ENCODE measurements at regions of chr5 and their contacts with region 1.

Region 1: DNA sequence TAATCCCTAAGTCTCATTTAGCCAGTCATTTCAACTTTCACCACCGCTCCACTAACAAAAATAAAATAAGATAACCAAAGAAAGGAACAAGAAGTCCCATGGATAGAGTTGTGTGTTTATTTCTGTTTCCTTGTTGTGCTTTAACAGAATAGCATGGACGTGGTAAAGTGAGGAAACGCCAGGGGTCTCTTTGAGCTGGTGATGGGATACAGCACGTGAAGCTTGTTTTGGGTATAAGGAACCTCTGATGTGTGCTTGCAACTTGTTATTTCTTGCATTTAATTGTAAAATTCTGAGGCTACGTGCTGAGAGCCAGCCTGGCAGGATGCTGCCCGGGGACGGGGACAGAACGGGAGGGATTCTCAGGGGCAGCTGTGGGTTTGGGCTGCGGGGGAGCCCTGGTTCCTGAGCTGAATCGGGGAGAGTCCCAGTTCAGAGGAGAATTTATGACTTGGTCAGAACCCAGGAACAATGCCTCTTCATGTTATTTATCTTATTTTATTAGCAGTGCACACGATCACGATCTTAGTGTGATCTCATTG is 63.4 kb downstream of the ANKRD33B start:
- DNase-seq: peak; percentile 38
- H3K4me3 Mint-ChIP-seq: peak overlapping the region; percentile 76
- H3K27ac Mint-ChIP-seq: no peak overlapping the region
- H3K4me1 Mint-ChIP-seq: peaks cover 26% of the 10 kb centered on the region
- H3K27me3 Mint-ChIP-seq: peaks cover 6% of the 10 kb centered on the region

Region 2: DNA sequence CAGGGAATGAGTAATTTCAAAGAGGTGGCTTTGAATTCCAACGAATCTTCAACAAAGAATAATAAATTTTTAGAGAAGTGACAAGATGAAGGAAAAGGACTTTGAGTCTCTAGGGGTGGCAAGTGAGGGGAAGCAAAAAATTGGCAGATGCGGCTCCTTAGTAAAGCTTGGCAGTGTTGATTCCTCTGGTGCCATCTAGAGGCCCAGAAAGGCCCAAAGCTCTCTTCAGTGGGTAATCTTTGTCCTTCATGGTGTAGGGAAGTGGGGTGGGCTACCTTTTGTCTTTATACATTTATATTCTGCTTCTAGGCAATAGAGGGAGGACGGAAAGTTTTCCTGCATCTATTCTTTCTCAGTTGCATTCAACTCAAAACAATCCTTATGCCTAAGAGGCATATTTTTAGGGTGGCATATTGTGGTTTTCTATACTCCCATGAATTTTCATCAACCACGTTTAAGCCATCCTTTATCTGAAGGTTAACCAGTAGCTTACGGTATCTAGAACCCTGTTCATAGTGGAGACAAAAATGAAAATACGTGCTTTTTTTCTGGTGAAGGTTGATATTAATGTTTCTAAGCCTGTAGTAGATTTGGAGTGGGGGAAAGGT is 203.0 kb before region 1 on chr5:
- CTCF ChIA-PET with region 1: interaction called, 17 read pairs
- intact Hi-C with region 1: no loop called
- DNase-seq: peak; percentile 43
- H3K4me3 Mint-ChIP-seq: no peak overlapping the region
- H3K27ac Mint-ChIP-seq: no peak overlapping the region
- H3K4me1 Mint-ChIP-seq: peaks cover 35% of the 10 kb centered on the region
- H3K27me3 Mint-ChIP-seq: no peaks in the 10 kb centered on the region

Region 3: DNA sequence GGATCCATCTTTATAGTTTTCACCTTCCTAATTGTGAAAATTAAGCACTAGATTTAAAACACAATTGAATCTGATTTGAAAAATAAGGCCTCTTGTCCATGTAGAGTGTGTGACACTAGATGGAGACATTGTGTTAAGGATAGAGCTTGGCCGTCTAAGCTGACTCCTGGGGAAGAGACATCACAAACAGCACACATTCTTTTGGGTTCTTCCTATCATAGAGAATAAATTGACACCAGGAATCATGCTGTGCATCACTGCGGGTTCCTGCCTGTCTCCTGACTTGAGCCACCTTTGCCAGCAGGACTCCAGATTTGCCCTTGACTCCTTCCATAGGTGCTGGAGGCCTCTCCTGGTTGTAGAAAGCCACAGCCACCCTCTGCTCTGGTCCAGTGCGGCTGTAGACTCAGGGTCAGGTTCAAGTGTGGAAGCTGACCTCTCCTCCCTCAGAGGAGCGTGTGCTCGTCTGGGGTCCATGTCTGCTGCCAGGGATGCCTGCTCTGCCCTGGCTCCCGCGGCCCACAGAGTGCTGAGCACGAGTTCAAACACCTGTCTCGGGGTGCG is 174.4 kb before region 1 on chr5:
- CTCF ChIA-PET with region 1: interaction called, 84 read pairs
- intact Hi-C with region 1: loop called (anchors 1 kb)
- DNase-seq: peak; percentile 22
- H3K4me3 Mint-ChIP-seq: no peak overlapping the region
- H3K27ac Mint-ChIP-seq: no peak overlapping the region
- H3K4me1 Mint-ChIP-seq: peaks cover 1% of the 10 kb centered on the region
- H3K27me3 Mint-ChIP-seq: no peaks in the 10 kb centered on the region

Region 4: DNA sequence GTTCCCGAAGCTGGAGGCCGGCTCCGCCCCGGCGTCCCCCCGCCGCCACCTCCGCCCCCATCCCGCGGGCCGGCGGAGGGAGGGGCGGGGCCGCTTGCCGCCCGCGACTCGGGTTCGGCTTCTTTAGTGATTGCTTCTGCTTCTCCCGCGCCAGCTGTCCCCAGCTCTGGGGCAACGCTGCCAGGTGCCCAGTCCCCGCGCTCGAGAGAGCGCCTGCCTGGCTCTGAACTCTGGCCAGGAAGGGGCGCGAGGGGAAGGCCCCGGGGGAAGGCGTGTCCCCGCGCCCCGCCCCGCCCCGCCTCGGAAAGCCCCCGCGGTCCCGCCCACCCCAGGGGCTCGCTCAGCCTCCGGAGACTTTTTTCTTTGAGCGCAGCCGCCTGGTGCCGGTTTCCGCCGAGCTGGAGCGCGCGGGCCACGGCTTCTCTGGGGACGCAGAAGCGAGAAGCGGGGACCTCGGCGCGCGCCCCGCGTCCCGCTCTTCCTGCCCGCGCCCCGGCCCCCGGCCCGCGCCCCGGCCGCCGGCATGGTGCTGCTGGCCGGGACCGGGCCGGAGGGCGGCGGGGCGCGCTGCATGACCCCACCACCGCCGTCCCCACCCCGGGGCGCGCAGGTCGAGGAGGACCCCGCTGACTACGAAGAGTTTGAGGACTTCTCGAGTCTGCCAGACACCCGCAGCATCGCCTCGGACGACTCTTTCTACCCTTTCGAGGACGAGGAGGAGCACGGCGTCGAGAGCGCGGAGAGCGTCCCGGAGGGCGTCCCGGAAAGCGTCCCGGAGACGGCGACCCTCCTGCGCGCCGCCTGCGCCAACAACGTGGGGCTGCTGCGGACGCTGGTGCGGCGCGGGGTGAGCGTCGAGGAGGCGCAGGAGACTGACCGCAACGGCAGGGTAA is 63.0 kb before region 1 on chr5 and contains the start of gene ANKRD33B:
- CTCF ChIA-PET with region 1: interaction called, 10 read pairs
- intact Hi-C with region 1: loop called (anchors 2 kb)
- DNase-seq: peak; percentile 85
- H3K4me3 Mint-ChIP-seq: peak within 1 kb of the TSS; percentile 84
- H3K27ac Mint-ChIP-seq: peak within 1 kb of the TSS; percentile 78
- H3K4me1 Mint-ChIP-seq: peaks cover 15% of the 10 kb centered on the region
- H3K27me3 Mint-ChIP-seq: peaks cover 20% of the 10 kb centered on the region
- total RNA-seq, gene ANKRD33B: 1.9 to 2.5 TPM

Region 5: DNA sequence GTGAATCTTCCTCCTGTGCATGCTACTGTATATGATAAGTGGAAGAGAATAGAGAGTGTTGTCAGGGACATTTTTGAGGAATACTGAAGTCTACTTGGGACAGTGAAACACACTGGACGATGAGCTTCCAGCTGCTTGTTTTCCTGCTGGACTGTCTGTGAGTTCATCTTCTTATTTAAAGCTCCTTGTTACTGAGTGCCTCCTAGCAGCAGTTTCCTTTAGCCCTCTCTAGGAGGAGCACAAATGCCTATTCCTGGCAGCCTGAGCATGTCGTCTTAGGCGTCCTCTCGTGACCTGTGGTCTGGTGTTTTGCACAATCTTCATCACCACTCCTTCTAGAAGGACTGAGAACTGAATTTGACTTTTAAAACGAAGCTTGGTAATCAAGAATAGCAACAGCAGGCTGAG is 19.6 kb before region 1 on chr5:
- CTCF ChIA-PET with region 1: interaction called, 18 read pairs
- intact Hi-C with region 1: no loop called
- DNase-seq: peak; percentile 17
- H3K4me3 Mint-ChIP-seq: no peak overlapping the region
- H3K27ac Mint-ChIP-seq: no peak overlapping the region
- H3K4me1 Mint-ChIP-seq: peaks cover 11% of the 10 kb centered on the region
- H3K27me3 Mint-ChIP-seq: peaks cover 20% of the 10 kb centered on the region

Region 6: GRCh38 chr5:10615693-10616092 is 11.5 kb before region 1 on chr5:
- CTCF ChIA-PET with region 1: interaction called, 11 read pairs
- intact Hi-C with region 1: no loop called
- DNase-seq: no peak
- H3K4me3 Mint-ChIP-seq: no peak overlapping the region
- H3K27ac Mint-ChIP-seq: no peak overlapping the region
- H3K4me1 Mint-ChIP-seq: no peaks in the 10 kb centered on the region
- H3K27me3 Mint-ChIP-seq: no peaks in the 10 kb centered on the region

Region 7: DNA sequence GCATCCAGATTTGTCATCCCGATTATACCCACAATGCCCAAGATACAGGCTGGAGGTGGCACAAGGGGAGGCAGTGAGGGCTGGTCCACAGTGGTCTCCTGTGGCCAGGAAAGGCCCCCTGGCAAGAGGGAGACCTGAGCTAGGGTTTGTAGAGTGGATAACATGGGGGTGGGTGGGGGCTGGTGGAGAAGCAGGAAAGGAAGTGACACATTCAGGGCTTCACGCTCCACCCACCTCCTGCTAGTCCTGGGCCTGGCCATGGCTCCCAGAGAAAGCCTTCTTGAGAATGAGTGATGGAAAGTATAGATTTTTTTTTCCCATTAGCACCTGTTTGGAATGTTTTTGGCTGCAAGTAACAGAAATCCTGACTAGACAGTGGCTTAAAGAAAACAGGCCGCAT is 17.9 kb after region 1 on chr5:
- CTCF ChIA-PET with region 1: no interaction called
- intact Hi-C with region 1: no loop called
- DNase-seq: peak; percentile 25
- H3K4me3 Mint-ChIP-seq: no peak overlapping the region
- H3K27ac Mint-ChIP-seq: no peak overlapping the region
- H3K4me1 Mint-ChIP-seq: peaks cover 12% of the 10 kb centered on the region
- H3K27me3 Mint-ChIP-seq: peaks cover 11% of the 10 kb centered on the region